Heart left ventricle (tissue), 16 donors: ENCODE measurements at regions of chr9 and their contacts with region 1.

Region 1: GRCh38 chr9:95736370-95736769 is 139.1 kb upstream of the ERCC6L2 start:
- DNase-seq: no peak
- ATAC-seq: no peak
- H3K4me3 ChIP-seq: no peak overlapping the region
- H3K27ac ChIP-seq: no peak overlapping the region
- H3K4me1 ChIP-seq: peaks cover 0 to 5% (median 0%) of the 10 kb centered on the region in 12 donors
- H3K27me3 ChIP-seq: peaks cover 0 to 3% (median 0%) of the 10 kb centered on the region in 9 donors
- CTCF ChIP-seq: peak in 1 of 12 donors; percentile 24
- POLR2A ChIP-seq: no peak

Region 2: DNA sequence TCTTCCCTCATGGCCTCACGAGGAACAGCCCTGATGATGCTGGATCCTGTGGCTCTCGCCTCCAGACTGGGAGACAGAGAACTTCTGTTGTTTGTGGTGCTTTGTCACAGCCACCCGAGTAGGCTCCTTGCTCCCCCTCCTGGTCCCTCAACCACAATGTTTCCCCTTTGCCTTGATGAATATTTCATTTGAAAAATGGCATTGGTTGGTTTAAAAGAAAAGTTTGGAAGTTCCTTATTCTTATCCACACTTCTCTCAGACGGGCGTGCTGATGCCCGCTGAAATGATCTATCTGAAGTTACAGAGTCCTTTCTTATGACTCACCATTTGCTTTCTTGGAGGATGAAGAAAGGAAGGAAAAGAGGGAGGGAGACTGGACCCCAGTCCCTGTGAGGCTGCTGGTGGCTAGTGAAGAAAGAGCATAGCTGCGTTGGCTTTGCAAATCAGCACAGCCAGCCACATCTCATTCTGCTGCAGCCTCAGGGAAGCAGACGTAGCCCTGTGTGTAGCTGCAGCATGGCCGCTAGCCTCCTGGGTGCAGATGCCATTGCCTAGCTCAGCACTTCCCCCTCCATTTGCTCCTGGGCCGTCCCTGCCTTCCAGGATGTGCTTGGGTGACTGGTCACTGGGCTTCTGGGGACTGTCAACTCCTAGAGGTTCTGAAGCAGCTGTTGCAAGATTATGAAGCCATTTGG is 325.1 kb after region 1 on chr9:
- intact Hi-C with region 1: loop called in 1 of 10 experiments (anchors 10 kb)
- DNase-seq: peak in 2 of 5 donors; percentile 37 to 40
- ATAC-seq: peak in 3 of 4 donors; percentile 72 to 84 (median 77)
- H3K4me3 ChIP-seq: peak overlapping the region in 1 of 12 donors; percentile 18
- H3K27ac ChIP-seq: peak overlapping the region in 2 of 12 donors; percentile 19 to 90
- H3K4me1 ChIP-seq: peaks cover 0 to 35% (median 0%) of the 10 kb centered on the region in 12 donors
- H3K27me3 ChIP-seq: no peaks in the 10 kb centered on the region
- CTCF ChIP-seq: peak; percentile 22 to 60 (median 43)
- POLR2A ChIP-seq: no peak